ENCODE measurements at regions of chr12 and their contacts with region 1.

Region 1: GRCh38 chr12:67943226-67943892 is 45.9 kb upstream of the IFNG-AS1 start:
- DNase-seq: no peak
- ATAC-seq: peak; percentile 69 to 85
- H3K4me3 ChIP-seq: no peak overlapping the region
- H3K27ac ChIP-seq: no peak overlapping the region
- H3K4me1 ChIP-seq: peaks cover 9% of the 10 kb centered on the region
- H3K27me3 ChIP-seq: no peaks in the 10 kb centered on the region
- CTCF ChIP-seq: peak; percentile 73

Region 2: DNA sequence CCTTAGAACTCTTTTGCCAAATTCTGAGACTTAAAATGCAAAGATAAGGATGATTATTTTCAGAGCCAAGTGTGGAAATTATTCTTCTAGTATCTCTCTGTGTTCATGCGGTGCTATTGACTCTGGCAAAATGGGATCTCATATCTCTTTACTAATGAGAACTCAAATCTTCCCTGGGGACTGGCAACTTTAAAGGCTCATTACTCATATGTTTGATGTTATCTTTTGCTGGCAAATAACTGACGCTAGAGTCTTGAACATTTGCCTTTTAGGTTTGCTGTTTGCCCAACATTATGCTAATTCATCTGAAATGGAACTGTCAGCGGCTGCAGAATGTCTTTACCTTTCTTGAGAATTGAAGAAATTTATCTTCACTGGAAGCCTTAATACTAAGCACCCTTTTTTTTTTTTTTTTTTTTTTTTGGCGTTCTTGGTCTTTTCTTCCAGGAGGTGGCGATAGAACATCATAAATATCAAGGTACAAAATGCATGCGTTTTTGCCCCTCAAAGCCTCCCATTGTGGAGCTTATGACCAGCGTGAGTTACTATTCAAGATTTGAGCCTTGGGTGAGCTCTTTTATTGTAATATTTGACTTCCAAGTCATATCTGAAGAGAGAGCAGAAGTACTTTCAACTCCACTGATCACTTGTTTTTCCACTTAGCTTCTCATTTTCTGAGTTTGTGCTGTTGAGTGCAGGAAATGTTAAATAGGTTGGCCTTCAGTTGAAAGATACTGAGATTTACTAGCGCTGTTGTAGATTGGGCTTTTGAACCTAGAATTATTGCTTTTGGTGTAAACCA is 587.6 kb before region 1 on chr12:
- intact Hi-C with region 1: loop called (anchors 5 kb)
- DNase-seq: no peak
- ATAC-seq: peak; percentile 38 to 80
- H3K4me3 ChIP-seq: no peak overlapping the region
- H3K27ac ChIP-seq: peak overlapping the region; percentile 12
- H3K4me1 ChIP-seq: peaks cover 25% of the 10 kb centered on the region
- H3K27me3 ChIP-seq: no peaks in the 10 kb centered on the region
- CTCF ChIP-seq: peak; percentile 56

Region 3: GRCh38 chr12:67772276-67773169 is 170.8 kb before region 1 on chr12:
- intact Hi-C with region 1: no loop called
- DNase-seq: no peak
- ATAC-seq: peak in 1 of 2 donors; percentile 16
- H3K4me3 ChIP-seq: no peak overlapping the region
- H3K27ac ChIP-seq: no peak overlapping the region
- H3K4me1 ChIP-seq: no peaks in the 10 kb centered on the region
- H3K27me3 ChIP-seq: no peaks in the 10 kb centered on the region
- CTCF ChIP-seq: no peak

Measured in lower lobe of right lung (tissue), 2 donors.